ENCODE measurements at regions of chr10 and their contacts with region 1.

Region 1: GRCh38 chr10:23344241-23344841 is at the start of gene C10orf67:
- DNase-seq: no peak
- total RNA-seq, gene C10orf67: 0.35 TPM

Region 2: DNA sequence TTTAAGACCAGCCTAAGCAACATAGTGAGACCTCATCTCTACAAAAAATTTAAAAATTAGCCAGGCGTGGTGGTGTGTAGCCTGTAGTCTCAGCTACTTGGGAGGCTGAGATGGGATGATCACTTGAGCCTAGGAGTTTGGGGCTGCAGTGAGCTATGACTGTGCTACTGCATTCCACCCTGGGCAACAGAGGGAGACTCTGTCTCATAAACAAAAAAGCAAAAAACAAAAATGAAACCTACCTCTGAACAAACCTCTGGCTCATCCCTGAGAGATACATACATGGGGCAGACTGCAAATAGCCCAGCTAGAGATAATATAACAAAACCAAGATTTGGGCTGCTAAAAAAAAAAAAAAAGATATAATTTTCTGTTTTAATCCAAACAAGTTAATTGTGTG is 19.2 kb before region 1 on chr10:
- intact Hi-C with region 1: no loop called
- DNase-seq: no peak

Region 3: GRCh38 chr10:23399701-23400144 is 55.4 kb after region 1 on chr10:
- intact Hi-C with region 1: loop called (anchors 2 kb)
- DNase-seq: peak; percentile 79